Caco-2 (cell line): ENCODE measurements at regions of chr13 and their contacts with region 1.

Region 1: DNA sequence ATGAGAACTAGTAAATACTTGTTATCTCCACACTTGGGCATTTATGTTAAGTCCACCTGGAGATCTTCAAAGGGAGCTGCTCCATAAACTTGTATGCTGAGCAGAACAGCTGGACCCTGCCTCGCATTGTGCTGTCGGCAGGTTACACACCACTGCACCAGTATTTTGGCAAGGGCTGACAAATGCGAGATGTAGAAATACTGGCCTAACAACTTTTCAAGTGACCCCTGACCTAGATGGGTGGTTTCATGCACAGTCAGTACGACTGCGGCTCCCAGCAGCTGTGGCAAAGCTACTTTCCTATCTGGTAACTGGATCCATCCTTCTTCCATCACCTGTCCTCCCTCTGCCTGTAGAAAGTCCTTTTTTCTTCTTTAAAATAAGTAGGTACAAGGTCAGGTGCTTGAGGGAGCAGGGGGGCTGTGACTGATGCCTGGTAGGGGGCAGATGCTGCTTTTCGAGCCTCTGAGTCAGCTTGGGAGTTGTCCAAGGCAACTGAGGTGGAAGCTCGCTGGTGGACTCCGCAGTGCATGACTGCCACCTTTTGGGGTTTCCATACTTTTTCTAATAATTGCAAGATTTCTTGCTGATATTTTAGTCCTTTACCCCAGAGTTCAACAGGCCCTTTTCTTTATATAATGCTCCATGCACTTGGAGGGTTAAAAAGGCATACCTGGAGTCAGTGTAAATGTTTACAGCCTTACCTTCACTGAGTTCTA is 86.8 kb downstream of the SLC25A15 start:
- DNase-seq: no peak
- H3K4me3 ChIP-seq: no peak overlapping the region
- H3K4me3 Mint-ChIP-seq: no peak overlapping the region
- H3K27ac Mint-ChIP-seq: no peak overlapping the region
- H3K4me1 ChIP-seq: no peaks in the 10 kb centered on the region
- H3K4me1 Mint-ChIP-seq: no peaks in the 10 kb centered on the region
- H3K27me3 ChIP-seq: no peaks in the 10 kb centered on the region
- H3K27me3 Mint-ChIP-seq: no peaks in the 10 kb centered on the region
- CTCF ChIP-seq: no peak

Region 2: DNA sequence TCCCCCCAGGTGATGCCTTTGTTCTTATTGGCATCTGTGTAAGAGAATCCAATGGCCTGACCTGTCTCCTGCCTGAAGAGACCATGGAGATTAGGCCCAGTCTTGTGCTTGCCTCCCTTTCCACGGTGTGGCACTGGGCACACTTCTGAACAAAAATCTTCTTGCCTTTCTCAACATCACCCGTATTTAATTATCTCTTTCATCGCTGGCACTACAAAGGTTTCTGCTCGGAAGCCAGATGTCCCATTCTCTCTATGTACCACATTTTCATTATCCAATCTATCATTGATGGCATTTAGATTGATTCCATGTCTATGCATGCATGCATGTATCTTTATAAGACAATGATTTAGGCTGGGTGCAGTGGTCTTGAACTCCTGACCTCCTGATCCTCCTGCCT is 12.5 kb before region 1 on chr13:
- CTCF ChIA-PET with region 1: no interaction called
- POLR2A ChIA-PET with region 1: no interaction called
- intact Hi-C with region 1: loop called (anchors 2 kb)
- DNase-seq: no peak
- H3K4me3 ChIP-seq: no peak overlapping the region
- H3K4me3 Mint-ChIP-seq: no peak overlapping the region
- H3K27ac Mint-ChIP-seq: no peak overlapping the region
- H3K4me1 ChIP-seq: no peaks in the 10 kb centered on the region
- H3K4me1 Mint-ChIP-seq: no peaks in the 10 kb centered on the region
- H3K27me3 ChIP-seq: no peaks in the 10 kb centered on the region
- H3K27me3 Mint-ChIP-seq: no peaks in the 10 kb centered on the region
- CTCF ChIP-seq: no peak

Region 3: DNA sequence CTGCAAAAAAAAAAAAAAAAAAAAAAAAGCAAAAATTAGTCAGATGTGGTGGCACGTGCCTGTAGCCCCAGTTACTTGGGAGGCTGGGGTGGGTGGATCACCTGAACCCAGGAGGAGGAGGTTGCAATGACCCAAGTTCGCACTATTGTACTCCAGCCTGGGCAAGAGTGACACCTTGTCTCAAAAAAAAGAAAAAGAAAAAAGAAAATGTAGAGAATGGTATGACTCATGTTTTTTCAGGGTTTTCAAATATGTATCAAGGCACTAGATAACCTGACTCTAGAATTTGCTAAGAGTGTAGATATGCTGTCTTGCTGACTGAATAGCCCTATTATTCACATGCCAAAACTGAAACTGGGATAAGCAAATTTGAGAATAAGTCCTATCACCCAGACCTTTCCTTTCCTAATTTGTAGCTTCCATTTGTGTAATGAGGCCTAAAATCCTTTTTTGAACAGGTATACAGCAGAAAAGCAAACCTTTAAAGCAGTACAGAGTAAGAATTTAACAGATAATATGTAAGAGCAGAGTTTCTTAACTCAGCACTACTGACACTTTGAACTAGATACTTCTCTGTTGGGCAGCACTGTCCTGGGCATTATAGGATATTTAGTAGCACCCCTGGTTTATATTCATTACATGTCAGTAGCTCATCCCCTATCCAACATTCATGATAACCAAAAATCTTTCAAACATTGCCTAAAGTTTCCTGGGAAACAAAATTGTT is 34.3 kb after region 1 on chr13:
- CTCF ChIA-PET with region 1: no interaction called
- POLR2A ChIA-PET with region 1: no interaction called
- intact Hi-C with region 1: no loop called
- DNase-seq: no peak
- H3K4me3 ChIP-seq: no peak overlapping the region
- H3K4me3 Mint-ChIP-seq: no peak overlapping the region
- H3K27ac Mint-ChIP-seq: no peak overlapping the region
- H3K4me1 ChIP-seq: peaks cover 5% of the 10 kb centered on the region
- H3K4me1 Mint-ChIP-seq: peaks cover 13% of the 10 kb centered on the region
- H3K27me3 ChIP-seq: no peaks in the 10 kb centered on the region
- H3K27me3 Mint-ChIP-seq: no peaks in the 10 kb centered on the region
- CTCF ChIP-seq: no peak

Region 4: GRCh38 chr13:41099986-41100385 is 223.8 kb after region 1 on chr13:
- CTCF ChIA-PET with region 1: no interaction called
- POLR2A ChIA-PET with region 1: no interaction called
- intact Hi-C with region 1: no loop called
- DNase-seq: no peak
- H3K4me3 ChIP-seq: no peak overlapping the region
- H3K4me3 Mint-ChIP-seq: no peak overlapping the region
- H3K27ac Mint-ChIP-seq: no peak overlapping the region
- H3K4me1 ChIP-seq: no peaks in the 10 kb centered on the region
- H3K4me1 Mint-ChIP-seq: no peaks in the 10 kb centered on the region
- H3K27me3 ChIP-seq: no peaks in the 10 kb centered on the region
- H3K27me3 Mint-ChIP-seq: no peaks in the 10 kb centered on the region
- CTCF ChIP-seq: no peak